ENCODE measurements at regions of chr18 and their contacts with region 1.

Region 1: DNA sequence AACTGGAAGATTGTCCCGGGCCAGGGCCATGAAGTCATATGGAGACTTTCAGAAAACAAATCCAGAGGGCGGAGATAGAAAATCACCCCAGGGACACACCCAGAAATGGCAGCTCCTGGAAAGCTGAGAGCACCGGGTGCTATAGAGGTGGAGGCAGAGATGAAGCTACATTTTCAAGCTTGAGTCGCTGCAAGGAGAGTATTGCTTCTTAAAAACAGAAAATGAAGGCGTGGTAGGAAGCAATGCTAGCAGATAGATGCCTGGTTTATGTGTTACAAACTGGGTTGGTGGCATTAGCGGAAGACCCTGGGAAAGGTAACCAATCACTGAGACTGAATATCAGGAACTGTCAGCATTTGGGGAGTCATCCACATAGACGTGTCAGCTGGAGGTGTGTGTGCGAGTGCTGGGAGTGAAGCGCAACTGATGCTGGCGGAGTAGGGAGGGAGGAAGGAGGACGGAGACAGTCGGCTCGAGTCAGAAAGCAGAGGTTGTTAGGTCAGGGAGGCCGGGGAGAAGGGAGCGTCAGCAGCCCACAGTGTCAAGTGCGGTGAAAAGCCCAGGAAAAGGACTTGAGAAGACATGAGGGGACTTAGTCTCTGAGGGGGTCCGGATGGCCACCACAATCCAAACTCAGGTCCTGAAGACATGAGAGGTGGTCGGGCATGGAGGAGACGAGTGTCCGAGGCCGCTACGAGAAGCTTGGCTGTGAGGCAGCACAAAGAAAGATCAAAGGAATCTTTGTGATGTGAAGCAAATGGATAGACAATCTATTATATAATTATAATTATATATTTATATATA is 45.4 kb downstream of the C18orf63 start:
- DNase-seq: no peak
- ATAC-seq: no peak
- H3K4me3 ChIP-seq: no peak overlapping the region
- H3K27ac ChIP-seq: no peak overlapping the region
- H3K4me1 ChIP-seq: no peaks in the 10 kb centered on the region
- H3K27me3 ChIP-seq: peaks cover 15% of the 10 kb centered on the region
- CTCF ChIP-seq: no peak

Region 2: DNA sequence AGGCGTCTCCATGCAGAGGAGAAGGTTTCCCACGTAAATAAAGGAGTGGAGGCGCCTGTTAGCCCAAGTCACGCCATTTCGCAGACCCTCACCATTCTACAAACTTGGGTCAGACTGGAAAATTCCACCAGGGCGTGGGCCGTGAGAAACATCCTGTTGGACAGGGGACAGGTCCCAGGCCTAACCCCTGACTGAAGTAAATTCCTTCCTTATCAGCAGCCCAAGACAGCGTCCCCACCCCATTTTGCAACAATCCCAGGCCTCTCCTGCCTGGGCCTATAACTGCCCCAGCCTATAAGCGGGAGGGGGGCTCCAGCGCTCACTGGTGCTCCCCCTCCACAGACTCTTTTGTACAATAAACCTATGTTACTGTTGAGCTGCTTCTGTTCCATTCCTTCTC is 1759.6 kb before region 1 on chr18:
- CTCF ChIA-PET with region 1: no interaction called
- POLR2A ChIA-PET with region 1: no interaction called
- intact Hi-C with region 1: loop called (anchors 5 kb)
- DNase-seq: no peak
- ATAC-seq: no peak
- H3K4me3 ChIP-seq: no peak overlapping the region
- H3K27ac ChIP-seq: no peak overlapping the region
- H3K4me1 ChIP-seq: no peaks in the 10 kb centered on the region
- H3K27me3 ChIP-seq: no peaks in the 10 kb centered on the region
- CTCF ChIP-seq: no peak

Measured in PC-3 (cell line).